A673 (cell line): ENCODE measurements at regions of chr14 and their contacts with region 1.

Region 1: DNA sequence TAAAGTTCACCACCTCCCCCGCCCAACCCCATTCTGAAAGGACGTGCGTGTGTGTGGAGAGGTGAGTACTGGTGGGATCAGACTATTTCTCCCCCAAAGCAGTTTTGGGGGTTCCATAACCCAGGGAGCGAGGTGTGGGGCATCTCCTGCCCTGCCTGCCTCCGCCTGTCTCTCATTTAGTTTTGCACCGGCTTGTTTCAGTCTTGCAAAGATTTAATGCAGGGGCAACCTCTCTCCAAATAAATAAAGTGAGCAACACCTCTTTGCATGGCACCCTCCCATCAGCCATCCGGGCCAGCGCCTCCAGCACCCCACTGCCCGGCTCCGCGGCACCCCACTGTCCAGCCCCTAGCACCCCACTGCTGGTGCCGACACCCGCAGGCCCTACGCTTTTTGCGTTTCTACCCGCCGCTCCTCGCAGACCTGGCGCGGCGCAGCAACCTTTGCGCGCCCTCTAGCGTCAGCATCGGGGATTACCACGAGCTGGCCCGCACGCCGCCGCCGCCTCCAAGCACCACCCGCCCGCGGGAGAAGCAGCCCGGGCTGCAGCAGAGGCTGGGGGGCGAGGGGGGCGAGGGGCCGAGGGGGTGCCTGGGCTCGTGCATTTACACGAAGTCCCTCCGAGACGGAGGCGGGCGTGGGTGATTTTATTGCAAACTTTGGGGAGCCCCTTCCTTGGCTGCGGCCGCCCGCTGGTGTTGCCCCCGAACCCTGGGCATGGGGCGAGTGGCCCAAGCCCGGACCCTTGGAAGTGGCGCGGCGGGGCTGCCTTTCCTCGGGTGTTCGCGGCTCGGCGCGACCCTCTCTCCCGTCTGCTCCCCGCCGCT is 55.8 kb upstream of the VRK1 start:
- DNase-seq: peak; percentile 75
- H3K4me3 ChIP-seq: peak overlapping the region; percentile 48
- H3K27ac ChIP-seq: no peak overlapping the region
- H3K4me1 ChIP-seq: peaks cover 7% of the 10 kb centered on the region
- H3K27me3 ChIP-seq: no peaks in the 10 kb centered on the region
- CTCF ChIP-seq: peak; percentile 88

Region 2: GRCh38 chr14:96206461-96206860 is 534.9 kb before region 1 on chr14:
- CTCF ChIA-PET with region 1: interaction called, 12 read pairs
- POLR2A ChIA-PET with region 1: no interaction called
- intact Hi-C with region 1: no loop called
- DNase-seq: peak; percentile 16
- H3K4me3 ChIP-seq: no peak overlapping the region
- H3K27ac ChIP-seq: no peak overlapping the region
- H3K4me1 ChIP-seq: peaks cover 10% of the 10 kb centered on the region
- H3K27me3 ChIP-seq: no peaks in the 10 kb centered on the region
- CTCF ChIP-seq: no peak

Region 3: GRCh38 chr14:96424109-96424989 is 317.0 kb before region 1 on chr14:
- CTCF ChIA-PET with region 1: no interaction called
- POLR2A ChIA-PET with region 1: no interaction called
- intact Hi-C with region 1: loop called (anchors 10 kb)
- DNase-seq: peak; percentile 86
- H3K4me3 ChIP-seq: peak overlapping the region; percentile 30
- H3K27ac ChIP-seq: no peak overlapping the region
- H3K4me1 ChIP-seq: no peaks in the 10 kb centered on the region
- H3K27me3 ChIP-seq: no peaks in the 10 kb centered on the region
- CTCF ChIP-seq: peak; percentile 84

Region 4: DNA sequence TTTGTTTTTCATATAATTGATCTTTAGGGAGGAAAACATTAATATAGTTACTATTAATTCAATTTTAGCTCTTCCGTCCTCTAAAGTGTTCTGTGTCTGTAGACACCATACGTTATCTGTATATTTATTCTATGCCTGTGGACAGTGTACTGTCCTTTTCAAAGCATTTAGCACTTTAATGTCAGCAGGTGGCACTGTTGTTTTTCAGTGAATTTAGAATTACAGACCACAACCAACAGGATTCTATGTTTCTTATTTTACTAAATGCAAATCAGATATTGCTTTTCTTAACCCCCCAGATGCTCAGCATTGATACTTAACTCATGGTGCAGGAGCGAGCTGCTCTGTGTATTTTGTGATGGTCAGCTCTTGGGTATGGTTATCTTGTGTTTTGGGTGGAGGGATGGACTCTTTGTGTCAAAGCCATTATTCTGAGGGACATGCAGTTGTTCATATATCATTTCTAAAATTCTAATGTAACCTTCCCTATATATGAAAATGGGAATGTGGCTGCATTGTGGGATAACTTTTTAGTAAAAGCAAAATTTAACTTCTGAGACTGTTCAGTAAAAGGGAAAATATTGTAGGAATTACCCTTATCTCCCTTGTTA is 174.0 kb before region 1 on chr14:
- CTCF ChIA-PET with region 1: interaction called, 12 read pairs
- POLR2A ChIA-PET with region 1: no interaction called
- intact Hi-C with region 1: loop called (anchors 5 kb)
- DNase-seq: peak; percentile 80
- H3K4me3 ChIP-seq: no peak overlapping the region
- H3K27ac ChIP-seq: peak overlapping the region; percentile 51
- H3K4me1 ChIP-seq: peaks cover 53% of the 10 kb centered on the region
- H3K27me3 ChIP-seq: no peaks in the 10 kb centered on the region
- CTCF ChIP-seq: peak; percentile 74